Activated B cell treated with CpG ODN at 0.5 μM for 24 hours (primary cell): ENCODE measurements at regions of chr1 and their contacts with region 1.

Region 1: GRCh38 chr1:18972531-18972930 is 16.1 kb upstream of the IFFO2 start:
- DNase-seq: no peak
- ATAC-seq: peak; percentile 37
- H3K4me3 Mint-ChIP-seq: no peak overlapping the region
- H3K27ac Mint-ChIP-seq: no peak overlapping the region
- H3K4me1 Mint-ChIP-seq: no peaks in the 10 kb centered on the region
- H3K27me3 Mint-ChIP-seq: peaks cover 11% of the 10 kb centered on the region
- CTCF ChIP-seq: no peak

Region 2: DNA sequence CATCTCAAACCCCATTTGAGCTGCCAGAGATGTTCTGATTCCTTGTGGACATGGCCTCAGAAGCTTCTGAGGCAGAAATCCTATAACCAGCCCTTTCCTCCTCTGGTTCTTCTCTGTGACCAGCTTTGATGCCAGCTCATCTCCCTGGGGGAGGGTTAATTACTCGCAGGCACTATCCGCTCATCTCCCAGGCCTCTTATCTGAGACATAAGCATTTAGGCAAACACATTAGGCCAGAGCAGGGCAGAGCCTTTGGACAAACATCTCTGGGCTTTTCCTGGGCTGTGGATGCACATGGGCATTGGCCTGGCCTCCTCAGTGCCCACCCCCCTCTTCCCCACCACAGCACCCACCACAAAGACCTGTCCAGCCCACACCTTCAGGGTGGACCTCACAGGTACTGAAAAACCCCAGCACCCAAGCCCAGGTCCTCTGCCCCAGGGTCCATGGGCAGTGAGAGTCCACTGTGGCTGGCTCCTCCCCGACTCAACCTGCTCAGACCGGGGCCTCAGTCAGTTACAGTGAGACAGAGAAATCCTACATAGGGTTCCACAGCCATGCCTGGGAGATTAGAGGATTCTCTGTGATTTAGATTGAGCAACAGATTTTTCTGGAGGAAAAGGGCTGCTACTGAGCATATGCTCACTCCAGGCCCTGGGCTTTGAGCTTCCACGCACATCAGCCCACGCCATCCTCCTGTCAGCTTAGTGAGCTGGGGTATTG is 838.0 kb before region 1 on chr1:
- CTCF ChIA-PET with region 1: no interaction called
- POLR2A ChIA-PET with region 1: no interaction called
- intact Hi-C with region 1: no loop called
- DNase-seq: no peak
- ATAC-seq: no peak
- H3K4me3 Mint-ChIP-seq: no peak overlapping the region
- H3K27ac Mint-ChIP-seq: no peak overlapping the region
- H3K4me1 Mint-ChIP-seq: no peaks in the 10 kb centered on the region
- H3K27me3 Mint-ChIP-seq: peaks cover 5% of the 10 kb centered on the region
- CTCF ChIP-seq: no peak

Region 3: DNA sequence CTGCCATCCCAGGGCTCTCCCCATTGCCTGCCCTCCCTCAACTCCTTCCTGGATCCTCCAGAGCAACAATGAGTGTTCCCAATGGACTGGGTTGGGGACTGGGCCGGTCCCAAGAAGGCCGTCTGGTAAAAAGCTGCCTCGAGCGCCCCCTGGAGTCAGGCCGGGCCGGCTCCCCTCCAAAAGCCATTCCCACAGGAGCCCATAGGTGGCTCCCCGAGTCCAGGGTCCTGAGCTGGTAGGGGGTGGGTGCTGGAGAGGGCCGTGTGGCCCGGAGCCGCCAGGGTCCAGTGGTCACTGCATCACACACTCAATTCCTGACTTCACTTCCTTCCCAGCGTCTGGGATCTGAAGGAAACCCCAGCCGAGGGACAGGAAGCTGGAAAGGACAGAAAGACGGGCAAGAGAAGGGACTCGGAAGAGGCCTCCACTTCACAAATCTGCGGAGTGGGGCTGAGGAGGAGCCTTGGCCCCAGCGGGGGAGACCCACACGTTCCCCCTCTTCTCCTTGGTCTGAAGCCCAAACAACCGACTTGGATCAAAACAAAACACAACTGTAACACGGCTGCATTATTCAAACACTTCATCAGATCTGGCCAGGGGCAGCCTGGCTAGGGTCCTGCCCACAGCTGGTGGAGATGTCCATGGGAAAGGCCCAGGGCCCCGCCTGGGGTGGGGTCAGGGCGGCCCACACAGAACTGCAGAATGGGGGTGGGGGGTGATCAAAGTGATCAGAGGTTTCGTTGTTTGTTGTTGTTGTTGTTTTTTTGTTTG is 59.3 kb before region 1 on chr1:
- CTCF ChIA-PET with region 1: interaction called, 216 read pairs
- POLR2A ChIA-PET with region 1: interaction called, 8 read pairs
- intact Hi-C with region 1: loop called (anchors 1 kb)
- DNase-seq: peak; percentile 73
- ATAC-seq: peak; percentile 93
- H3K4me3 Mint-ChIP-seq: no peak overlapping the region
- H3K27ac Mint-ChIP-seq: no peak overlapping the region
- H3K4me1 Mint-ChIP-seq: peaks cover 18% of the 10 kb centered on the region
- H3K27me3 Mint-ChIP-seq: no peaks in the 10 kb centered on the region
- CTCF ChIP-seq: no peak